Motor neuron (in vitro differentiated cells): ENCODE measurements at regions of chr12 and their contacts with region 1.

Region 1: GRCh38 chr12:114662512-114663177 is 21.3 kb downstream of the TBX3 start:
- ATAC-seq: peak in 6 of 8 experiments; percentile 25 to 96 (median 60)
- H3K4me3 ChIP-seq: no peak overlapping the region
- H3K27ac ChIP-seq: no peak overlapping the region
- H3K4me1 ChIP-seq: peaks cover 0 to 5% of the 10 kb centered on the region in 2 donors

Region 2: DNA sequence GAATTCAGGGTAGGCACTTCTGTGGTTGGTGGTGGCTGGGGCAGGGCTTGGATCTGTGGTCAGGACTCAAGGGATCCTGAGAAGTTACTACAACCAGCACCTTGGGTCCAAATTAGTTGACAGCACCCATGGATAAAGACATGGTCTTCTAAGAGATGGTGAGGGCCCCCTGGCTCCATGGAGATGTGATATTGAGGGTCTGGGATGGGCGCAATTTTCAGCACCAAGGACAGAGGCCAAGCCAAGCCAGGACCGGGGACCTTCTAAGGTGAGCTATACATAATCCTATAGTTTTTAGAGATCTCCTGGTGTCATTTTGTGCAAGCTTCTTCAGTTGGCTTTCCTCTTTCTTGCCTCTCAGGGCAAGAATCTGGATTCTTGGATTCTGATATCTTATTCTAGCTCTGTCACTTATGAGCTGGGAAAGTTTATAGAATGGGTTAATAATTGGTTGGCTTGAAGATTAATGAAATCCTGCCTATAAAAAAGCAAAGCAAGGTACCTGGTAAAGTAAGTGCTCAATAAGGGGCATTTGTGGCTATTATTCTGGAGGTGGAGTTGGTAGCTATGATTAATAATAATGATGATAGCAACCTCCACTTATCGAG is 1060.9 kb before region 1 on chr12:
- in situ Hi-C with region 1: no loop called
- ATAC-seq: no peak
- H3K4me3 ChIP-seq: no peak overlapping the region
- H3K27ac ChIP-seq: no peak overlapping the region
- H3K4me1 ChIP-seq: no peaks in the 10 kb centered on the region

Region 3: GRCh38 chr12:114721266-114721665 is 58.6 kb after region 1 on chr12:
- in situ Hi-C with region 1: no loop called
- ATAC-seq: no peak
- H3K4me3 ChIP-seq: no peak overlapping the region
- H3K27ac ChIP-seq: no peak overlapping the region
- H3K4me1 ChIP-seq: no peaks in the 10 kb centered on the region

Region 4: GRCh38 chr12:115632308-115632707 is 969.7 kb after region 1 on chr12:
- in situ Hi-C with region 1: loop called in 1 of 9 experiments (anchors 25 kb)
- ATAC-seq: peak in 1 of 8 experiments; percentile 30
- H3K4me3 ChIP-seq: no peak overlapping the region
- H3K27ac ChIP-seq: no peak overlapping the region
- H3K4me1 ChIP-seq: peaks cover 5 to 8% of the 10 kb centered on the region in 2 donors

Region 5: DNA sequence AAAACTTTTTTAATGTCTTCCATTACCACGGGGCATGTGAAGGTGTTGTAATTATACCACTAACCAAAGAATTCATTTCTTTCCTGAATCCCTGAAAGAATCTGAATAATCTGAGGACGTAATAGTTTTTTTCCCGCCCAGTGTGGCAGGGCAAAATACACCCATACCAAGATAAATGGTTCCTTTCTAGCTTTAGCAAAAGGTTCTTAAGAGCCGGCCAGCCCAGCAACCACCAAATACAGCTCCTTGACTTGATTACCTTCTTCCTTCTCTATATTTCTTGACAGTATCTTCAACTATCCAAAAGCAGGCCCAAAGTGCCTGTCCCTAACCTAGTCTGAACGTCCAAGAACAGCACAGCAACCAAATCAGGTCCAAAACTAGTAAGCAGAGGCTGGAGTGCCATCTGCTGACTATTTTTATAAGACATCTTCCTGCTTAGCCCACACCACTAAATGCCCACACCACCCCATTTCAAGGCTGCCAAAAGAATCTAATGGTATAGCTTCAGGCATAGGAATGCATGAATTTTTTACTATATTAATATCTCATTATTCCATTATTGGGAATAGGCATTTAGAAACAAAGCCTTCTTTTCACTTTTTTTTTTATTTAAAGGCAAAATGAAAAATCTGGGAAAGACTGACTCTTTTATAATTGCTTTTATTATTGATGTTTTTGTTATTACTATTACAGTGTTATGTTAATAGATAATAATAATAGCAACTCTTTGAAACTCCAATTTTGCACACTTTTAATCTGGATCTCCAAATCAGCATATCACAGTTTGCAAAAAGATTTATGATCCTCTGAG is 1090.5 kb after region 1 on chr12:
- in situ Hi-C with region 1: loop called (anchors 10 to 25 kb)
- ATAC-seq: peak; percentile 44 to 95 (median 68)
- H3K4me3 ChIP-seq: no peak overlapping the region
- H3K27ac ChIP-seq: no peak overlapping the region
- H3K4me1 ChIP-seq: no peaks in the 10 kb centered on the region

Region 6: GRCh38 chr12:115916910-115917668 is 1254.4 kb after region 1 on chr12:
- in situ Hi-C with region 1: loop called in 8 of 9 experiments (anchors 10 to 25 kb)
- ATAC-seq: peak; percentile 49 to 88 (median 58)
- H3K4me3 ChIP-seq: peak overlapping the region; percentile 9 to 20 (median 18)
- H3K27ac ChIP-seq: no peak overlapping the region
- H3K4me1 ChIP-seq: peaks cover 0 to 3% of the 10 kb centered on the region in 2 donors